CD4-positive, alpha-beta memory T cell (primary cell): ENCODE measurements at regions of chr13 and their contacts with region 1.

Region 1: GRCh38 chr13:46495651-46496050 is 57.3 kb upstream of the LRCH1 start:
- DNase-seq: no peak
- H3K4me3 ChIP-seq: no peak overlapping the region
- H3K4me3 Mint-ChIP-seq: no peak overlapping the region
- H3K27ac ChIP-seq: no peak overlapping the region
- H3K27ac Mint-ChIP-seq: no peak overlapping the region
- H3K4me1 ChIP-seq: no peaks in the 10 kb centered on the region
- H3K4me1 Mint-ChIP-seq: no peaks in the 10 kb centered on the region
- H3K27me3 ChIP-seq: no peaks in the 10 kb centered on the region
- H3K27me3 Mint-ChIP-seq: peaks cover 2 to 8% of the 10 kb centered on the region in 2 donors

Region 2: DNA sequence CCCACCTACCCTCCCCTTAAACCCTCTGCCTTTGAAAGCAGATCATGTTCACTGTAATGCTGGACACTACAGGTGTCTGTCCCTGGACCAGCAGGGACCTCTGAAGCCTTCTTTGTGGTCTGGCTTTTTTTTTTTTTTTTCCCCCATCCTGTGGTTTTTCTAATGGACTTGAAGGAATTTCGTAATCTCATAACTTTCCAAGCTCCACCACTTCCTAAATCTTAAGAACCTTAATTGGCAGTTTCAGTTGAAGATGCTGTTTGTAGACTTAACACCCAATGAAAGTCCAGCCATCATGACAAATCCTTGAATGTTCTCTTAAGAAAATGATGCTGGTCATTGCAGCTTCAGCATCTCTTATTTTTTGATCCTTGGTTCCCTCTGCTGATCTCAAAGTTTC is 12.3 kb after region 1 on chr13:
- CTCF ChIA-PET with region 1: no interaction called
- POLR2A ChIA-PET with region 1: no interaction called
- intact Hi-C with region 1: no loop called
- DNase-seq: no peak
- H3K4me3 ChIP-seq: no peak overlapping the region
- H3K4me3 Mint-ChIP-seq: no peak overlapping the region
- H3K27ac ChIP-seq: no peak overlapping the region
- H3K27ac Mint-ChIP-seq: no peak overlapping the region
- H3K4me1 ChIP-seq: no peaks in the 10 kb centered on the region
- H3K4me1 Mint-ChIP-seq: no peaks in the 10 kb centered on the region
- H3K27me3 ChIP-seq: no peaks in the 10 kb centered on the region
- H3K27me3 Mint-ChIP-seq: peaks cover 7 to 9% of the 10 kb centered on the region in 2 donors

Region 3: DNA sequence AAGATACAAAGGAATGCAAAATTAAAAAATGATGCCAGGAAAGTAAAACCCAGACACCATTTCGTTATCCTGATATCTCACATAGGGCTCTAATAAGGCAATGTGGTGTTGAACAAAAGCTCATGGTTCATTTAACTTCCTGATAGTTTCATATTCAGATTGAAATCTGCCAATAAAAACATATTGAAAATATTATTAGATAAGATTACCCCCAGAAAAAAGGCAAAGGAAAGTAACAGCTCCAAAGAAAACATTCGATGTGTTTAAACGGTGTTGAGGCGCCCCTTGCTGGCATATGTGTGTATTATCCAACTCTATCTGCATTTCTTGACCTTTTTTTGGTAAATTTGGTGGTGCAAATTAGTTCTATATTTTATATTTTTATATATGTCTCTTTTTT is 225.4 kb after region 1 on chr13:
- CTCF ChIA-PET with region 1: interaction called, 12 read pairs
- POLR2A ChIA-PET with region 1: no interaction called
- intact Hi-C with region 1: no loop called
- DNase-seq: peak in 4 of 5 donors; percentile 25 to 42 (median 37)
- H3K4me3 ChIP-seq: no peak overlapping the region
- H3K4me3 Mint-ChIP-seq: no peak overlapping the region
- H3K27ac ChIP-seq: no peak overlapping the region
- H3K27ac Mint-ChIP-seq: no peak overlapping the region
- H3K4me1 ChIP-seq: no peaks in the 10 kb centered on the region
- H3K4me1 Mint-ChIP-seq: no peaks in the 10 kb centered on the region
- H3K27me3 ChIP-seq: no peaks in the 10 kb centered on the region
- H3K27me3 Mint-ChIP-seq: no peaks in the 10 kb centered on the region